Breast epithelium (tissue), 4 donors: ENCODE measurements at regions of chr1 and their contacts with region 1.

Region 1: GRCh38 chr1:168019407-168019806 is 82.5 kb upstream of the MPC2 start:
- DNase-seq: no peak
- H3K4me3 ChIP-seq: no peak overlapping the region
- H3K27ac ChIP-seq: no peak overlapping the region
- H3K4me1 ChIP-seq: no peaks in the 10 kb centered on the region
- H3K27me3 ChIP-seq: no peaks in the 10 kb centered on the region
- CTCF ChIP-seq: no peak
- POLR2A ChIP-seq: no peak

Region 2: DNA sequence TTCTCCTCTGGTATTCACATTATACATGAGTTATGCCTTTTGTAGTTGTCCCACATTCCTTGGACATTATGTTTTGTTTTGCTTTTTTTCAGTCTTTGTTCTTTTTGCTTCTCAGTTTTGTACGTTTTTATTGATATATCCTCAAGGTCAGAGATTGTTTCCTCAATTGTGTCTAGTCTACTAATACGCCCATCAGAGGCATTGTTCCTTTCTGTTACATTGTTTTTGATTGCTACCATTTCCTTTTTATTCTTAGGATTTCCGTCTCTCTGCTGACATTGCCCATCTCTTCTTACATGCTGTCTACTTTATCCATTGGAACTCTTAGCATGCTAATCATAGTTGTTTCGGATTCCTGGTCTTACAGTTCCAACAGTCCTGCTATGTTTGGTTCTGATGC is 54.8 kb before region 1 on chr1:
- intact Hi-C with region 1: no loop called
- DNase-seq: no peak
- H3K4me3 ChIP-seq: no peak overlapping the region
- H3K27ac ChIP-seq: no peak overlapping the region
- H3K4me1 ChIP-seq: no peaks in the 10 kb centered on the region
- H3K27me3 ChIP-seq: no peaks in the 10 kb centered on the region
- CTCF ChIP-seq: no peak
- POLR2A ChIP-seq: no peak

Region 3: DNA sequence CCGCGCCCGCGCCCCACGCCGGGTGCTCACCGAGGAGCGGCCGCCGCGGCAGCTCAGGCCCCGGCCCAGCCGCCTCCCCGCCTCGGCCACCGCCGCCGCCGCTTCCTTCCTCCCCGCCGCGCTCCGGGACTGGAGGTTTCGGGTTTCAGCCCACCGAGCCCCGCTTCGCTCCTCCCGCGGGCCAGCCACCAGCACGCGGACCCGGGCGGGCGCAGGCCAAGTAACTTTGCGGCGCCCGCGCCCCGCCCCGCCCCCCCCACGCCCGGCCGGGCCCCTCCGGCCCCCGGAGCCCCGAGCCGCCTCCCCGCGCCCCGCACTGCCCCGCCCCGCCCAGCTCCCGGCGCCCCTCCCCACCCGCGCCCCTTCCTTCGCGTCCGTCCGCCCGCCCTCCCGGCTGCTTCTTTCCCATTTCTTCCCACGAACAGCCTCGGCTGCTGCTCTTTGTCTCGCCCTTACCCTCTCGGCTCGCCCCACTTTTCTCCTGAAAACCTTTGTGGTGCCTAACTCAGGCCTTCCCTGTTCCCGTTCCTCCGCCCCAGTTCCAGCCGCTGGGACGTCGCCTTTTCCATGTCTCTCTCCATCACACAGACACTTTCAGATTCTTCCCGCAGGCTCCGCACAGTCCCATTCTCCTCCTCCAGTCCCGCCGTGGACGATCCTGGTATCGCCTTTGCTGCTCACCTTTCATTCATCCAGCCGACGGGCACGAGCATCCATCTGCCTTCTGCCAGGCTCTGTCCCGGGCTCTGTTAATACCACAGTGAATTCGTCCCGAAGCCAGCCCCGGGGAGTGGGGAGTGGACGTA is 117.5 kb after region 1 on chr1 and contains the start of gene GPR161:
- intact Hi-C with region 1: loop called (anchors 5 kb)
- DNase-seq: no peak
- H3K4me3 ChIP-seq: peak within 1 kb of the TSS; percentile 65 to 80 (median 79)
- H3K27ac ChIP-seq: peak within 1 kb of the TSS; percentile 62 to 83
- H3K4me1 ChIP-seq: no peaks in the 10 kb centered on the region
- H3K27me3 ChIP-seq: no peaks in the 10 kb centered on the region
- CTCF ChIP-seq: no peak
- POLR2A ChIP-seq: no peak
- total RNA-seq, gene GPR161: 2.8 to 5.6 (median 4.5) TPM

Region 4: GRCh38 chr1:168719306-168720111 is 700.1 kb after region 1 on chr1:
- intact Hi-C with region 1: loop called (anchors 10 kb)
- DNase-seq: no peak
- H3K4me3 ChIP-seq: no peak overlapping the region
- H3K27ac ChIP-seq: no peak overlapping the region
- H3K4me1 ChIP-seq: no peaks in the 10 kb centered on the region
- H3K27me3 ChIP-seq: no peaks in the 10 kb centered on the region
- CTCF ChIP-seq: no peak
- POLR2A ChIP-seq: no peak